ENCODE measurements at regions of chr4 and their contacts with region 1.

Region 1: GRCh38 chr4:88027611-88028608 is 20.5 kb downstream of the PKD2 start:
- DNase-seq: peak; percentile 95
- ATAC-seq: peak; percentile 92
- H3K4me3 ChIP-seq: no peak overlapping the region
- H3K27ac ChIP-seq: peak overlapping the region; percentile 53; the same call in 1 of the 2 replicates
- H3K4me1 ChIP-seq: peaks cover 11% of the 10 kb centered on the region
- H3K27me3 ChIP-seq: no peaks in the 10 kb centered on the region
- CTCF ChIP-seq: no peak
- POLR2A ChIP-seq: no peak
- RAD21 ChIP-seq: no peak

Region 2: DNA sequence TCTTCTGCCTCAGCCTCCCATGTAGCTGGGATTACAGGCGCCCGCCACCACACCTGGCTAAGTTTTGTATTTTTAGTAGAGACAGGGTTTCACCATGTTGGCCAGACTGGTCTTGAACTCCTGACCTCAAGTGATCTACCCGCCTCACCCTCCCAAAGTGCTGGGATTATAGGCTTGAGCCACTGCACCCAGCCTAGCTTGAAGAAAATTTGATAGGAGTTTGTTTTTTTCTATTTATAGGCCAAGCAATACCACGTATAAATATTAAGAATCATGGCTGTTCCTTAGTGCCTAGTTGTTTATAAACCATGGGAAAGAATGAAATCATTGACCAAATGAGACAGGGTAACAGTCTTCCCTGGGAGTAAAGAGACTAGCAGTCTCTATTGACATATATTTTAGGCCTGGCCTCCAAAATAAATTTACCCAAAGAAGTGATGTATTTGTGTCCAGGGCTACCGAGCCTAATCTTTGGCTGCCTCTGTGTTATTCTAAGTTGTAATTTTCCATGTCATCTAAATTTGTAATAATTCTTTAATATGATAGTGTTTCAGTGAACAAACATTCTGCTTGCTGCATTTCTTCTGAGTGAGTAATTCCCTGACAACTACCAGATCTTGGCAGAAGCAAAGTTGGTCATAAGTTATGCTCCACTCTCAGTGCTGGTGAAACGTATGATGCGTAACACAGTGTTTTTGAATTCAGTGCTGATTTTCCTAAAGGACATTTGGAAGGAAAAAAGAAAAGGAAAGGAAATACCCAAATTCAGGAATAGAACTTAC is 10.2 kb before region 1 on chr4:
- CTCF ChIA-PET with region 1: no interaction called
- POLR2A ChIA-PET with region 1: no interaction called
- dilution Hi-C with region 1: no loop called
- in situ Hi-C with region 1: no loop called
- intact Hi-C with region 1: loop called (anchors 1 kb)
- DNase-seq: peak; percentile 98
- ATAC-seq: peak; percentile 87
- H3K4me3 ChIP-seq: no peak overlapping the region
- H3K27ac ChIP-seq: 0 out of 2 replicates have a peak overlapping the region, but pooled peaks have one; percentile 28
- H3K4me1 ChIP-seq: peaks cover 21% of the 10 kb centered on the region
- H3K27me3 ChIP-seq: no peaks in the 10 kb centered on the region
- CTCF ChIP-seq: no peak
- POLR2A ChIP-seq: no peak
- RAD21 ChIP-seq: no peak